Activated naive CD8-positive, alpha-beta T cell treated with anti-CD3 and anti-CD28 coated beads, Interleukin-2, amount 10 ng/mL, durations not matched to agents 7 days and 5 days (primary cell): ENCODE measurements at regions of chr14 and their contacts with region 1.

Region 1: DNA sequence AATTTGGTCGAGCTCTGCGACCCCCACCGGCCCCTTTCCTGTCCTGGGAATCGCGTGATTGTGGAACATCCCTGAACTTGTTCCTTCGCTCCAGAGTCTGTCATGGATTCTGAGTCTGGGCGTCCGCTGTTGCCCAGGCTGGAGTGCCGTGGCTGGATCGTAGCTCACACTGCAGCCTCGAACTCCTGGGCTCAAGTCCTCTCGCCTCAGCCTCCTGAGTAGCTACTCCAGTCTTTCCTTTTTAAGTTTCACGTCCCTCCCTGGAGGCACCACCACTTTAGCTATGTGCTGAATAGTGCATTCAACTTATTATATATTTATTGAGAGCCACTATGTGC is 698 bp downstream of the ACOT6 start:
- DNase-seq: no peak
- ATAC-seq: peak; percentile 3
- H3K4me3 Mint-ChIP-seq: peak overlapping the region; percentile 86
- H3K27ac Mint-ChIP-seq: peak overlapping the region; percentile 70
- H3K4me1 Mint-ChIP-seq: peaks cover 10% of the 10 kb centered on the region
- H3K27me3 Mint-ChIP-seq: peaks cover 2% of the 10 kb centered on the region

Region 2: GRCh38 chr14:73553845-73554244 is 59.2 kb before region 1 on chr14:
- POLR2A ChIA-PET with region 1: no interaction called
- DNase-seq: no peak
- ATAC-seq: no peak
- H3K4me3 Mint-ChIP-seq: no peak overlapping the region
- H3K27ac Mint-ChIP-seq: no peak overlapping the region
- H3K4me1 Mint-ChIP-seq: no peaks in the 10 kb centered on the region
- H3K27me3 Mint-ChIP-seq: peaks cover 12% of the 10 kb centered on the region

Region 3: DNA sequence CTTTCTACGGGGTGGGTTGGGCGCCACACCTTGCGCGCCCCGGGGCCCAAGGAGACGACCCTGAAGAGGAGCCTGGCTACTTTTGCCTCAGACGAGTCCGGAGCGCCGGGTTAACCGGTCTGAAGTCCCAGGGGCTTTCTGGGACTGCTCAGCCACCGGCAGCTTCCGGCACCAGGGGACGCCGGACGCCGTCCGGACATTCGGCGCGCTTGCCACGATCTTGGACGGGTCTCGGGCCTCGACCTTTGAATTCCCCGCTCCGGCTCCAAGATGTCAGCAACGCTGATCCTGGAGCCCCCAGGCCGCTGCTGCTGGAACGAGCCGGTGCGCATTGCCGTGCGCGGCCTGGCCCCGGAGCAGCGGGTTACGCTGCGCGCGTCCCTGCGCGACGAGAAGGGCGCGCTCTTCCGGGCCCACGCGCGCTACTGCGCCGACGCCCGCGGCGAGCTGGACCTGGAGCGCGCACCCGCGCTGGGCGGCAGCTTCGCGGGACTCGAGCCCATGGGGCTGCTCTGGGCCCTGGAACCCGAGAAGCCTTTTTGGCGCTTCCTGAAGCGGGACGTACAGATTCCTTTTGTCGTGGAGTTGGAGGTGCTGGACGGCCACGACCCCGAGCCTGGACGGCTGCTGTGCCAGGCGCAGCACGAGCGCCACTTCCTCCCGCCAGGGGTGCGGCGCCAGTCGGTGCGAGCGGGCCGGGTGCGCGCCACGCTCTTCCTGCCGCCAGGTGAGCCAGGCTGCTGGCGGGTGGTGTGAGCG is 21.1 kb before region 1 on chr14 and contains the start of gene ACOT4:
- POLR2A ChIA-PET with region 1: interaction called, 11 read pairs
- DNase-seq: peak; percentile 74
- ATAC-seq: peak; percentile 82
- H3K4me3 Mint-ChIP-seq: peak within 1 kb of the TSS; percentile 74
- H3K27ac Mint-ChIP-seq: peak within 1 kb of the TSS; percentile 54
- H3K4me1 Mint-ChIP-seq: peaks cover 16% of the 10 kb centered on the region
- H3K27me3 Mint-ChIP-seq: no peaks in the 10 kb centered on the region
- total RNA-seq, gene ACOT4: 1.9 TPM